CD8-positive, alpha-beta T cell (primary cell): ENCODE measurements at regions of chr17 and their contacts with region 1.

Region 1: DNA sequence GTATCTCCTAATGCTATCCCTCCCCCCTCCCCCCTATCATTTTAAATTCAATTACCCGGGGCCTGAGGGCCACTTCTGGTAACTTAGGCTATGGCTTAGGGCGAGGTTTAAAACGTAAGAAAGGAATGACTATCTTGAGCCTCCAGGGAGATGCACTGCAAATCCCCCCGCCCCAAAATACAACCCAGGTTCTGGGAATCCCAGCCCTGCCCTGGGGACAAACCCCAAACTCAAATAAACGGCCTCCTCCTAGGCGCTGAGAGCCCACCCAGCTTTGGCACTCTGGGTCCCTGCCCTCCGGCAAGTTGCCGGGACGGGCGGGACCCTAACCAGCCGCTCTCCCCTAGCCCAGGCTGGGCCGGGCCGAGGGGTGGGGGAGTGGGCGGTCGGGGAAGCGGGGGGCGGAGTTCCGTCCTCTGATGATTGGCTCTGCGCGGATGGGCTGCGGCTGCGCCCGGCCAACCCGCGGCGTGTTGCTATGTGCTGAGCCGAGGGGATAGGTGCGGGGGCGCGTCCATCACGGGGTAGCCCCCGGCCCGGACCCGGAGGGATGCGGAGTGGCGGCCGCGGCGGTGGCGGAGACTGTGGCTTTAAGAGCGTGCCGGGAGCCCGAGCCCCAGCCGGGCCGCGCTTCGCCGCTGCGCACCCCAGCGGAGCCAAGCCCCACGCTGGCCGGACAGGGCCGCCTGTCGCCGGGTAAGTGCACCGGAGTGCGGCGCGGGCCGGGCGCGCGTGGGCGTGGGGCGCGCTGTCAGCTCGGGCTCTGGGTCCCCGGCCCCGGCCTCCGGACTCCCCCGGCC is at the start of gene YPEL2:
- DNase-seq: peak; percentile 68 to 94 (median 91)
- ATAC-seq: peak; percentile 85
- H3K4me3 ChIP-seq: peak within 1 kb of the TSS; percentile 49 to 86
- H3K4me3 Mint-ChIP-seq: peak within 1 kb of the TSS; percentile 94
- H3K27ac ChIP-seq: peak within 1 kb of the TSS; percentile 44 to 52
- H3K27ac Mint-ChIP-seq: peak within 1 kb of the TSS; percentile 94
- H3K4me1 ChIP-seq: peaks cover 64% of the 10 kb centered on the region
- H3K4me1 Mint-ChIP-seq: peaks cover 81% of the 10 kb centered on the region
- H3K27me3 ChIP-seq: no peaks in the 10 kb centered on the region
- H3K27me3 Mint-ChIP-seq: no peaks in the 10 kb centered on the region
- CTCF ChIP-seq: no peak
- total RNA-seq, gene YPEL2: 48.7 to 54.4 TPM

Region 2: DNA sequence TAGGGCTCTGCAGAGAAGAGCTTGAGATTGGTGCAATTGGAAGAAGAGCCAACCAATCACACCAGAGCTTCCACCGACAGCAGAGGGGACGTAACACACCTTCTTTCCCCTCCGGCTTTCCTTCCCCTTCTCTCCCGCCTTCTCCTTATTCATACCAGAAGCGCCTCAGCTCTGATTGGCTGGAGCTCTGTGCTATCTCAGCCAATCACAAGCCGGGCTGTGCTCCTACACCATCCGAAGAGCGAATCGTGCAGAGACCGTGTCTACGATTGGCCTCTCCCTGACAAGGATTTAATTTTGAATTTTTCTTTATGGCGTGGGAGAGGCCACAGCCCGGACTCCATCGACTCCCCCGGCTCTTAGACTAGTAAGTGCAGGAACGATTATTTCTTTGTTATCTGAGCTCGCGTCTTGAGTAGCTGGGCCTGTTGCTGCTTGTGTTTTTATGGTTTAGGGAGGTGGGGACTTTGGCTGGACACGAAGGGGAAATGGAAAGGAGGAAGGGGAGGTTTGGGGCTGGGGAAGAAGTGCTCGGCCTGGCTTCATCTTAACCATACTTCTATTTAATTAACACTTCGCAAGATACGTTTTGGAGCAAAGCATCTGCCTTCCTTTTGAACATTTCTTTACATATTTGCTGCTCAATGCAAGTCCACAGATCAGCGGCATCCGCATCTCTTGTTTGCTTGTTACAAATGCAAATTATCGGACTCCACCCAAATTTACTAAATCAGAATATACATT is 175.7 kb before region 1 on chr17 and contains the start of gene PRR11:
- CTCF ChIA-PET with region 1: no interaction called
- POLR2A ChIA-PET with region 1: no interaction called
- intact Hi-C with region 1: loop called in 1 of 2 experiments (anchors 1 kb)
- DNase-seq: peak; percentile 82 to 99 (median 90)
- ATAC-seq: peak; percentile 85
- H3K4me3 ChIP-seq: peak within 1 kb of the TSS; percentile 95 to 97
- H3K4me3 Mint-ChIP-seq: no peak within 1 kb of the TSS
- H3K27ac ChIP-seq: peak within 1 kb of the TSS; percentile 62 to 74
- H3K27ac Mint-ChIP-seq: no peak within 1 kb of the TSS
- H3K4me1 ChIP-seq: peaks cover 15% of the 10 kb centered on the region
- H3K4me1 Mint-ChIP-seq: peaks cover 28% of the 10 kb centered on the region
- H3K27me3 ChIP-seq: no peaks in the 10 kb centered on the region
- H3K27me3 Mint-ChIP-seq: no peaks in the 10 kb centered on the region
- CTCF ChIP-seq: no peak
- total RNA-seq, gene PRR11: 0.30 to 0.69 TPM

Region 3: DNA sequence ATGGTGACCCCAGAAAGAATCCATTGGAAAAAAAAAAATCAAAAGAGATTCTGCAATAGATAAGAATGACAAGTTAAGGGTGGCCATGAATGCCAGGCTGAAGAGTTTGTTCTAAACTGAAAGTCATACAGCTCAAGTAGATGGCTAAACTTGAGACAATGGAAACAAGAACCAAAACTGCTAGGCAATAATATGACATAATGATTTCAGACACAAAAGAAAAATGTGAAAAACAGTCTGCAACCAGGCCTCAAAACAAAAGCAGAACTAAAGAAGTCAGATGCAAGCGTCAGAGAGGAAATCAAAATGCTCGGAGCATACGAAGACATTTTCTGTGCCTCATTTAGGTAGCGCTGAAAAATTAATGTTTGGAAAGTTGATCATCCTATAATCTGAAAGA is 54.3 kb before region 1 on chr17:
- CTCF ChIA-PET with region 1: no interaction called
- POLR2A ChIA-PET with region 1: no interaction called
- intact Hi-C with region 1: no loop called
- DNase-seq: peak in 1 of 9 experiments; percentile 3
- ATAC-seq: no peak
- H3K4me3 ChIP-seq: no peak overlapping the region
- H3K4me3 Mint-ChIP-seq: no peak overlapping the region
- H3K27ac ChIP-seq: no peak overlapping the region
- H3K27ac Mint-ChIP-seq: peak overlapping the region; percentile 10
- H3K4me1 ChIP-seq: no peaks in the 10 kb centered on the region
- H3K4me1 Mint-ChIP-seq: no peaks in the 10 kb centered on the region
- H3K27me3 ChIP-seq: no peaks in the 10 kb centered on the region
- H3K27me3 Mint-ChIP-seq: no peaks in the 10 kb centered on the region
- CTCF ChIP-seq: no peak

Region 4: DNA sequence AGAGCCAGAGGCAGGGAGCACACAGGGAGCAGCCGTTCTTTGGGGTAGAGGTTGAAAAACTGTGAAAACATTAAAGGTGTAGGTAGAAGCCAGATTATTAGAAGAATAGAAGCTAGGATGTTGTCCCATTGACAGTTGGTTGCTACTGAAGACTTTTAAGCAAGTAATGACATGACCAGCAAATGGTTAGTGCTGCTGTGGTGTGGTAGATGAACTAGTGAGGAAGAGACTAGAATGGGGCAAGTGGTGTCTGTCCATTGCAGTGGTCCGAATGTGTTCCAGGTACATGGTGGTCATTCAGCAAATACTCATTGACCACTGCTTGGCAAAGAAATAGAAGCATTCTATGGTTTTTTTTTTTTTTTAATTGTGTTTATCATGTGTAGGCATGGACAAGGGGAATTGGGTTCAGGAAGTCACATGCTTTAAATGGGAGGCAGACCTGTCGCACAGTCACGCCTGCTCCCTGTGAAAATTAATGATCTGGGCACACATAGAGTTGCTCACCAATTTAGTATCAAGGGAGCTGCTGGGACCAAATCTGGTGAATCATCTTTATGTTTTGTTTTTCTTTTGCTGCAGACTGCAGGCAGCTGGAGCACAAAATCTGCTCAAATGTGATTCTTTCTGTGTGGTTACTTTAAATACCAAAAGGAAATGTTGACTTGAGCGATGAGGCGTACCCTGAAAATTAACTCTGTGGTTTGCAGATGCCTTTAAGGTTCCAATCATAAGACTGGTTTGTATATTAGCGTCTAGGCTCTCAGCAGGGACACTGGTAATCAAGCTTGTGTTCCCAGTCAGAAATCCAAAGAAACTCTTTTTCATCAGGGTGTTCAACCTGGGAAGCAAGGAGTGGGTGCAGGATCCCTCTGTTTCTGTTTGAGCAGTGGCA is 30.8 kb after region 1 on chr17:
- CTCF ChIA-PET with region 1: interaction called, 12 read pairs
- POLR2A ChIA-PET with region 1: interaction called, 6 read pairs
- intact Hi-C with region 1: loop called (anchors 1 to 2 kb)
- DNase-seq: peak in 8 of 9 experiments; percentile 15 to 74 (median 50)
- ATAC-seq: peak; percentile 64
- H3K4me3 ChIP-seq: peak overlapping the region; percentile 16 to 44
- H3K4me3 Mint-ChIP-seq: peak overlapping the region; percentile 80
- H3K27ac ChIP-seq: peak overlapping the region; percentile 47 to 51
- H3K27ac Mint-ChIP-seq: peak overlapping the region; percentile 99
- H3K4me1 ChIP-seq: peaks cover 86% of the 10 kb centered on the region
- H3K4me1 Mint-ChIP-seq: peaks cover 88% of the 10 kb centered on the region
- H3K27me3 ChIP-seq: no peaks in the 10 kb centered on the region
- H3K27me3 Mint-ChIP-seq: no peaks in the 10 kb centered on the region
- CTCF ChIP-seq: no peak

Region 5: DNA sequence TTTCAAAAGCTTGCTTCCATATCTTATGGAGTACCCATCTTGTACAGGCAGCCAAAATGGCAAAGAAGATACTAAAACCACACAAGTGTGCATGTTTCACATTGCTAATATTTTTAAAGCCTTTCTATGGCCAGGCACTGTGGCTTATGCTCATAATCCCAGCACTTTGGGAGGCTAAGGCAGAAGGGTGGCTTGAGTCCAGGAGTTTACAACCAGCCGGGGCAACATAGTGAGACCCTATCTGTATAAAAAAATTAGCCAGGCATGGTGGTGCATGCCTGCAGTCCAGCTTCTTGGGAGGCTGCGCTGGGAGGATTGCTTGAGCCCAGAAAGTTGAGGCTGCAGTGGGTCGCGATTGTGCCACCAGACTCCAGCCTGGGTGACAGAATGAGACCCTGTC is 71.4 kb after region 1 on chr17:
- CTCF ChIA-PET with region 1: interaction called, 15 read pairs
- POLR2A ChIA-PET with region 1: no interaction called
- intact Hi-C with region 1: no loop called
- DNase-seq: no peak
- ATAC-seq: no peak
- H3K4me3 ChIP-seq: no peak overlapping the region
- H3K4me3 Mint-ChIP-seq: no peak overlapping the region
- H3K27ac ChIP-seq: no peak overlapping the region
- H3K27ac Mint-ChIP-seq: no peak overlapping the region
- H3K4me1 ChIP-seq: no peaks in the 10 kb centered on the region
- H3K4me1 Mint-ChIP-seq: no peaks in the 10 kb centered on the region
- H3K27me3 ChIP-seq: no peaks in the 10 kb centered on the region
- H3K27me3 Mint-ChIP-seq: no peaks in the 10 kb centered on the region
- CTCF ChIP-seq: no peak

Region 6: GRCh38 chr17:59440784-59441441 is 109.6 kb after region 1 on chr17:
- CTCF ChIA-PET with region 1: interaction called, 175 read pairs
- POLR2A ChIA-PET with region 1: interaction called, 12 read pairs
- intact Hi-C with region 1: loop called (anchors 1 kb)
- DNase-seq: peak; percentile 66 to 91 (median 88)
- ATAC-seq: peak; percentile 97
- H3K4me3 ChIP-seq: no peak overlapping the region
- H3K4me3 Mint-ChIP-seq: no peak overlapping the region
- H3K27ac ChIP-seq: no peak overlapping the region
- H3K27ac Mint-ChIP-seq: no peak overlapping the region
- H3K4me1 ChIP-seq: peaks cover 19% of the 10 kb centered on the region
- H3K4me1 Mint-ChIP-seq: peaks cover 17% of the 10 kb centered on the region
- H3K27me3 ChIP-seq: no peaks in the 10 kb centered on the region
- H3K27me3 Mint-ChIP-seq: no peaks in the 10 kb centered on the region
- CTCF ChIP-seq: peak; percentile 76

Region 7: GRCh38 chr17:59619293-59620063 is 288.1 kb after region 1 on chr17 and contains the start of gene CLTC:
- CTCF ChIA-PET with region 1: no interaction called
- POLR2A ChIA-PET with region 1: no interaction called
- intact Hi-C with region 1: loop called in 1 of 2 experiments (anchors 5 kb)
- DNase-seq: peak; percentile 83 to 98 (median 90)
- ATAC-seq: peak; percentile 82
- H3K4me3 ChIP-seq: peak within 1 kb of the TSS; percentile 98 to 99
- H3K4me3 Mint-ChIP-seq: peak within 1 kb of the TSS; percentile 96
- H3K27ac ChIP-seq: peak within 1 kb of the TSS; percentile 91 to 99
- H3K27ac Mint-ChIP-seq: peak within 1 kb of the TSS; percentile 98
- H3K4me1 ChIP-seq: peaks cover 37% of the 10 kb centered on the region
- H3K4me1 Mint-ChIP-seq: peaks cover 48% of the 10 kb centered on the region
- H3K27me3 ChIP-seq: no peaks in the 10 kb centered on the region
- H3K27me3 Mint-ChIP-seq: no peaks in the 10 kb centered on the region
- CTCF ChIP-seq: no peak
- total RNA-seq, gene CLTC: 73.4 to 86.0 TPM